Activated naive CD4-positive, alpha-beta T cell treated with anti-CD3 and anti-CD28 coated beads, Interleukin-2, amount 10 ng/mL, durations not matched to agents 7 days and 5 days (primary cell): ENCODE measurements at regions of chr5 and their contacts with region 1.

Region 1: GRCh38 chr5:16626663-16627264 is 10.0 kb upstream of the RETREG1 start:
- DNase-seq: peak; percentile 55
- H3K4me3 Mint-ChIP-seq: no peak overlapping the region
- H3K27ac Mint-ChIP-seq: peak overlapping the region; percentile 92
- H3K4me1 Mint-ChIP-seq: peaks cover 63% of the 10 kb centered on the region
- H3K27me3 Mint-ChIP-seq: no peaks in the 10 kb centered on the region

Region 2: DNA sequence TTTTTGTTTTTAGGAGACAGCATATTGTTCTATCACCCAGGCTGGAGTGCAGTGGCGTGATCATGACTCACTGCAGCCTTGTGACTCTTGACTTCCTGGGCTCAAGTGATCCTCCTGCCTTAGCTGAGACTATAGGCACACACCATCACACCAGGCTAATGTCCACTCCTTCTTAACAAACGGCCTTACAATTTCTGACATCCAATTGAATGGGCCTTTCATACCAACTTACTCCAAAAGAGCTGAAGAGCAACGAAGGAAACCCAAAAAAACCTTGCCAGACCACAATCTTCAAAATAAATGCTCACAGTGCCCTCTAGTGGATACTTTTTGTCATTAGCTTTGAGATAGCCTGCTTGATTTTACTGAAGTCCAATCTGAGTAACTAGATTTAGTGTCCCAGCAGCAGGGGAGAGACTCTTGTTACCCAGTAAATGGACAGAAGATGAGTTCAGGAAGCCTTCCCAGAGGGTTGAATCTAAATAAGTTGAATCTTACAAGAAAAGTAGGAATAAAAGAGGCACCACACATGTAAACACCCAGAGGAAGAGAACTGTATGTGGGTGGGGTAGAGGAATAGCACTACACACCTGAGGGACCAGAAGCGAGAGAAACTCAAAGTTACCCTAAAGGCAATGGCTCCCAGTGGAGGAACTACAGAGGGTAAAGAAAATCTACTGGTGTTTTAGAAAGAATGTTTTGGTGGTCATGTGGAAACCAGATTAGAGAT is 170.5 kb before region 1 on chr5:
- CTCF ChIA-PET with region 1: no interaction called
- DNase-seq: peak; percentile 26
- H3K4me3 Mint-ChIP-seq: no peak overlapping the region
- H3K27ac Mint-ChIP-seq: peak overlapping the region; percentile 67
- H3K4me1 Mint-ChIP-seq: peaks cover 37% of the 10 kb centered on the region
- H3K27me3 Mint-ChIP-seq: no peaks in the 10 kb centered on the region

Region 3: DNA sequence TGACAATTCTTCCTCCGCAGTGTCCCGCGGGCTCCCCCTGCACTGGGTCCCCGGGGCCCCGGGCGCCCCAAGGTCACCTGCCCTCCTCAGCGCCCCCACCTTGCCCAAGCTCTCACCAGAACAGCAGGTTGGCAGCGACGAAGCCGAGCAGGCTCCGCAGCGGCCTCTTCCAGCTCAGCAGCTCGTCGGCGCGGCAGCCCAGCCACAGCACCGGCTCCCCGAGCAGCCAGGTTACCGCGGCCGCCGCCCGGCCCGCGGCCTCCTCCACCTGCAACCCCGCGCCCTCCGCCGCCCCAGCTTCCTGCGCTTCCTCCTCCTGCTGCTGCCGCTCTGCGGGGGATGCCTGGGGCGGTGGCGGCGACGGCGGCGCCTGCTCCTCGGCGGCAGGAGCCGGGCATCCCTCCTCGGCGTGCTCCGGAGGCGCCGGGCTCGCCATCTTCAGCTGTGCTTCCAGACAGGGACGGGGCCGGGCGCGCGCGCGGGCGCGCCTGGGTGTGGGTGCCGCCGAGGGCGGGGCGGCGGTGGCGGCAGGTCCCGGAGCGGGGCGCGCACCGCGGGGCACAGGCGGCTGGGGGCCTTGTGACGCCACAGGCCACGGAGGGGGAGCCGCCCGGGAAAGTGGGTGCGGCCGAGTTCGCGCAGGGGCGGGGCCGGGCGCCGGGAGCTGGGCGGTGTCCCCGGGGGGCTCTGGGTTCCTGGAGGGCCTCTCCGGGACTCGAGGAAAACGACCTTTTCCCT is 10.1 kb before region 1 on chr5 and contains the start of gene RETREG1:
- CTCF ChIA-PET with region 1: interaction called, 16 read pairs
- DNase-seq: peak; percentile 87
- H3K4me3 Mint-ChIP-seq: peak within 1 kb of the TSS; percentile 99
- H3K27ac Mint-ChIP-seq: peak within 1 kb of the TSS; percentile 97
- H3K4me1 Mint-ChIP-seq: peaks cover 44% of the 10 kb centered on the region
- H3K27me3 Mint-ChIP-seq: peaks cover 3% of the 10 kb centered on the region